ENCODE measurements at regions of chr5 and their contacts with region 1.

Region 1: GRCh38 chr5:149018909-149019443 is 43.9 kb downstream of the SH3TC2 start:
- DNase-seq: no peak
- H3K4me3 Mint-ChIP-seq: no peak overlapping the region
- H3K27ac Mint-ChIP-seq: peak overlapping the region; percentile 40
- H3K4me1 Mint-ChIP-seq: peaks cover 19% of the 10 kb centered on the region
- H3K27me3 Mint-ChIP-seq: peaks cover 6% of the 10 kb centered on the region

Region 2: DNA sequence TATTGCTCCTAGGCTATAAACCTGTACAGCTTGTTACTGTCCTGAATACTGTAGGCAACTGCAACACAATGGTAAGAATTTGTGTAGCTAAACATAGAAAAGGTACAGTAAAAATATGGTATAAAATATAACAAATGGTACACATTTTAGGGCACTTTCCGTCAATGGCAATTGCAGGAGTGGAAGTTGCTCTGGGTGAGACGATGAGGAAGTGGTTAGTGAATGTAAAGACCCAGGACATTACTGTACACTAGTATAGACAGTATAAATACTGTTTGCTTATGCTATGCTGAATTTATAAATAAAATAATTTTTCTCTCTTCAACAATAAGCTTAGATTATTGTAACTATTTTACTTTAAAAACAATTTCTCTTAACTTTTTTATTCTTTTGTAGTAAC is 208.2 kb before region 1 on chr5:
- intact Hi-C with region 1: loop called (anchors 2 kb)
- DNase-seq: no peak
- H3K4me3 Mint-ChIP-seq: no peak overlapping the region
- H3K27ac Mint-ChIP-seq: no peak overlapping the region
- H3K4me1 Mint-ChIP-seq: peaks cover 46% of the 10 kb centered on the region
- H3K27me3 Mint-ChIP-seq: peaks cover 8% of the 10 kb centered on the region

Region 3: GRCh38 chr5:149035372-149035790 is 16.4 kb after region 1 on chr5:
- intact Hi-C with region 1: no loop called
- DNase-seq: peak; percentile 41
- H3K4me3 Mint-ChIP-seq: no peak overlapping the region
- H3K27ac Mint-ChIP-seq: no peak overlapping the region
- H3K4me1 Mint-ChIP-seq: peaks cover 39% of the 10 kb centered on the region
- H3K27me3 Mint-ChIP-seq: peaks cover 5% of the 10 kb centered on the region